Cardiac septum (tissue), 1 donor: ENCODE measurements at regions of chr6 and their contacts with region 1.

Region 1: DNA sequence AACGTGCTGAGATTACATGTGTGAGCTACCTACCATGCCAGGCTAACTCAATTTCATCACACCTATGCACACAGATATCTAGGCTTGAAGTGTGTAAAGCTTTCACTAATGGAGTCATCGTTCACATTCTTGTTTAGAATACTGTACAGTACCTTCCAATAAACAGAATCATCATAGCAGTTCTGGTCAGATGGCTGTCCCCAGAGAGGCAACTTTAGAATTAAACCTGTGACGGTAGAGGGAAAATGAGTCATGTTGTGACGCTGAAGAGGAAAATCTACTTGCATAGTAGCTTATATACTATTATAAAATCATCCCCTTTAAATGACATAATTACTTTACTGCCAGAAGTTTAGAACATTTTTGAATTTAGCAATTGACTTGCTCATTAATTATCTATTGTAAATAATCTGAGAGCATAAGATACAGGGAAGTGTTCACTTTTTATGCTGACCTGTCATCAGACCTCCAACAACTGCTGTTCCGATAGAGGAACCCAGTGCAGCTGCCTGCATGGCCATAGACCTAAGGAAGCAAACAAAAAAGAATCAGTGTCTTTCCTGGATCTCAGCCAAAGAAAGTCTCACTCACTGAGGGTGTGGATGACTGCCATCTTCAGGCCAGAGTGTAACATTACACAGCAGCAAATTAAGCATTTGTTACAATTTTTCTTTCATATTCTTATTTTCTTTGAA is 29.8 kb downstream of the RHAG start:
- DNase-seq: no peak

Region 2: DNA sequence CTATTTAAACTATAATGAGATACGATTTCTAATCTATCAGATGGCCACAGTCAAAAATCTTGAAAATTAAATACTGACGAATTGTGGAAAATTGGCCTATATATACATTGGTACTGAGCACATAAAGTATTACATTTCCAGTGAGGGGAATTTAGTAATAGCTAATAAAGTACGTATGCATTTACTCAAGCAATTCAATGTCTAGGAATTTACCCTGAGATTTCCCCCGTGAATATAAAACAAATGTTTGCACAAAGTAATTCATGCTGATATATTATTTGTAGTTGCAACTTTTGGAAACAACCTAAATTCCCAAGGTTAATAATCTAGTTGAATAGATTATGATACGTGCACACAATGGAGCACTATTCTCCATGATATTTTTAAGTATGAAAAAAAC is 71.0 kb before region 1 on chr6:
- intact Hi-C with region 1: loop called (anchors 5 kb)
- DNase-seq: no peak